ENCODE measurements at regions of chr5 and their contacts with region 1.

Region 1: GRCh38 chr5:172188033-172188892 is at the start of gene STK10:
- DNase-seq: peak; percentile 89 to 92 (median 92)
- H3K4me3 ChIP-seq: peak within 1 kb of the TSS; percentile 94 to 96
- H3K4me3 Mint-ChIP-seq: peak within 1 kb of the TSS; percentile 98 to 100 (median 99)
- H3K27ac ChIP-seq: peak within 1 kb of the TSS; percentile 94
- H3K27ac Mint-ChIP-seq: peak within 1 kb of the TSS; percentile 97 to 100 (median 99)
- H3K4me1 ChIP-seq: peaks cover 25% of the 10 kb centered on the region
- H3K4me1 Mint-ChIP-seq: peaks cover 8 to 46% (median 21%) of the 10 kb centered on the region in 4 donors
- H3K27me3 ChIP-seq: no peaks in the 10 kb centered on the region
- H3K27me3 Mint-ChIP-seq: no peaks in the 10 kb centered on the region
- total RNA-seq, gene STK10: 306 to 314 TPM

Region 2: DNA sequence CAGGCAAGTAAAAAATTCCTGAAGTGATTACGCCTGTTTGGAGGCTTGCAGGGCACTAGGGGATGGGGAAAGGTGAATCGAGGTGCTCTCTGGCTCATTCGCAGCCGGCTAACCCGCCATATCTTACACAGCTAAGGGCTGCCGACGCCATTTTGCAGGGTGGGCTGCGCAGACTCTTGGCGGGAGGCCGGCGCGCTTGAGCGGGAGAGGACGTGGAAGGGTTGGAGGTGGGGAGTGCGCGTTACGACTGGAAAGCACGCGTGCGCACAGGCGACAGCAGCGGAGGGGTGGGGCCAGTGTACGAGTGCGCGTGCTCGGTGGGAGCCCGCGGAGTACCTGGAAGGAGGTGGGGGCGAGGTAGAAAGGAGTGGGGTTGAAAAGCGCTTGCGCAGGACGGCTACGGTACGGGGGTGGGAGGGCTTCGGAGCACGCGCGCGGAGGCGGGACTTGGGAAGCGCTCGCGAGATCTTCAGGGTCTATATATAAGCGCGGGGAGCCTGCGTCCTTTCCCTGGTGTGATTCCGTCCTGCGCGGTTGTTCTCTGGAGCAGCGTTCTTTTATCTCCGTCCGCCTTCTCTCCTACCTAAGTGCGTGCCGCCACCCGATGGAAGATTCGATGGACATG is 800.8 kb before region 1 on chr5 and contains the start of gene NPM1:
- CTCF ChIA-PET with region 1: no interaction called
- POLR2A ChIA-PET with region 1: interaction called, 7 read pairs
- intact Hi-C with region 1: loop called (anchors 5 kb)
- DNase-seq: peak; percentile 97 to 99 (median 99)
- H3K4me3 ChIP-seq: peak within 1 kb of the TSS; percentile 74 to 94
- H3K4me3 Mint-ChIP-seq: peak within 1 kb of the TSS; percentile 97 to 99 (median 98)
- H3K27ac ChIP-seq: peak within 1 kb of the TSS; percentile 79
- H3K27ac Mint-ChIP-seq: peak within 1 kb of the TSS; percentile 95 to 100 (median 99)
- H3K4me1 ChIP-seq: peaks cover 45% of the 10 kb centered on the region
- H3K4me1 Mint-ChIP-seq: peaks cover 29 to 58% (median 43%) of the 10 kb centered on the region in 4 donors
- H3K27me3 ChIP-seq: no peaks in the 10 kb centered on the region
- H3K27me3 Mint-ChIP-seq: peaks cover 0 to 3% of the 10 kb centered on the region in 2 donors
- total RNA-seq, gene NPM1: 857 to 892 TPM

Region 3: DNA sequence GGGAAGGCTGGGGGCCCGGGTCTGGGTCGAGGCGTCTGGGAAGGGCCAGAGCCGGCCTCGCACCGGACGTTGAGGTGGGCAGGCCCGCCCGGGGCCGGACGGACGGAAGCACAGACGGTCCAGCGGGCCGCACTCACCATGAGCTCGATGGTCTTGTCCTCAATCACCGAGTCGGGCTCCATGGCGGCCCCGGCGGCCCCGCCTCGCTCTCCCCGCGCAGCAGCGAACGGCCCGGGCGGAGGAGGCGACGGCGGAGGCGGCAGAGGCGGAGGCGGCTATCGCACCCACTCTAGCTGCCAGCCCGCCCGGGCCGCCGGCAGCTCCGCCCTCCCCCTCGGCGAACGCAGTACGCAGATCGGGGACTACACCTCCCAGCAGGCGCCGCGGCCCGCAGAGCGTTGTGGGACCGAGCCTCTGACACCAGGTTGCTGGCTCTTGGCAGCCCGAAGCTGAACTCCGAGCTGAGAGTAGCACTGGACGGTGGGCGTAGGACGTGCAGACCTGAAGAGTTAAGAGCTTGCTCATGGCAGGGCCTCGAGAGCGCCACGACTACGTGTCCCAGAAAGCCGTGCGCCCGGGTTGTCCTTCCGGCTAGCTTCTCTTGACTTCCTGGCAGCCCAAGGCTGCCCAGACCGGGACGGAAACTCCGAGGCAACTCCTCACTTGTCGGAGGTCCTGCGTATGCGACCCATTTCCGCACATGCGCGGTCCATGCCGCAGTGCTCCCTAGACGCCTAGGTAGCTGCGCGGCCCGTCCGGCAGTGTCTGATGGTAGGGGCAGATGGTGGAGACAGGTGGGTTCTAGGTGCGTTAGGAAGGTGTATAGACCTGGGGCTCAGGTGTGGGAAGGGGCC is 181.7 kb before region 1 on chr5 and contains the start of gene FBXW11:
- CTCF ChIA-PET with region 1: interaction called, 25 read pairs
- POLR2A ChIA-PET with region 1: interaction called, 24 read pairs
- intact Hi-C with region 1: loop called (anchors 1 kb)
- DNase-seq: peak; percentile 93 to 98 (median 94)
- H3K4me3 ChIP-seq: peak within 1 kb of the TSS; percentile 93 to 97
- H3K4me3 Mint-ChIP-seq: peak within 1 kb of the TSS; percentile 91 to 99 (median 97)
- H3K27ac ChIP-seq: peak within 1 kb of the TSS; percentile 93
- H3K27ac Mint-ChIP-seq: peak within 1 kb of the TSS; percentile 93 to 99 (median 98)
- H3K4me1 ChIP-seq: peaks cover 53% of the 10 kb centered on the region
- H3K4me1 Mint-ChIP-seq: peaks cover 32 to 56% (median 46%) of the 10 kb centered on the region in 4 donors
- H3K27me3 ChIP-seq: no peaks in the 10 kb centered on the region
- H3K27me3 Mint-ChIP-seq: no peaks in the 10 kb centered on the region
- total RNA-seq, gene FBXW11: 41.7 to 43.4 TPM

Region 4: GRCh38 chr5:172071289-172071875 is 116.9 kb before region 1 on chr5:
- CTCF ChIA-PET with region 1: interaction called, 16 read pairs
- POLR2A ChIA-PET with region 1: interaction called, 25 read pairs
- intact Hi-C with region 1: loop called (anchors 1 kb)
- DNase-seq: no peak
- H3K4me3 ChIP-seq: no peak overlapping the region
- H3K4me3 Mint-ChIP-seq: peak overlapping the region in 6 of 8 donors; percentile 8 to 62 (median 32)
- H3K27ac ChIP-seq: no peak overlapping the region
- H3K27ac Mint-ChIP-seq: peak overlapping the region; percentile 1 to 95 (median 29)
- H3K4me1 ChIP-seq: peaks cover 60% of the 10 kb centered on the region
- H3K4me1 Mint-ChIP-seq: peaks cover 39 to 65% (median 50%) of the 10 kb centered on the region in 4 donors
- H3K27me3 ChIP-seq: no peaks in the 10 kb centered on the region
- H3K27me3 Mint-ChIP-seq: no peaks in the 10 kb centered on the region

Region 5: DNA sequence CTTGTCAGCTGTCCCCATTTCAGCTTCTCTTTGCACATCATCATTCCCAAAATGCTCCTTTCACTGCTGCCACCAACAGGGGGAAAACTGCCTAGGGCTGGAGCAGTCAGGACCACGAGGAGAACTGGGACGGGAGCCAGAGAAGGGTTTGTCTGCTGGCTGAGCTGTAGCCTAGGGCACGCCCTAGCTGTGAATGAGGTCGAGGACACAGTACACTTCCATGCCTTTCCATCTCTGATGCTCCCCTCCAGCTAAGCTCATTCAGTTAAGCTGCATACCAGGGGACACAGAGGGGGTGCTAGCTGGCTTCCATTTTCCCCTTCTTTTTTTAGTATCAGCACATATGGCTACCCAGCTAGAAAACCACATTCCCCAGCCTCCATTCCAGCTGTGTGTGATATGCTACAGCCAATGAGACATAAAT is 65.0 kb before region 1 on chr5:
- CTCF ChIA-PET with region 1: interaction called, 248 read pairs
- POLR2A ChIA-PET with region 1: interaction called, 597 read pairs
- intact Hi-C with region 1: no loop called
- DNase-seq: no peak
- H3K4me3 ChIP-seq: no peak overlapping the region
- H3K4me3 Mint-ChIP-seq: no peak overlapping the region
- H3K27ac ChIP-seq: no peak overlapping the region
- H3K27ac Mint-ChIP-seq: peak overlapping the region; percentile 42 to 93 (median 49)
- H3K4me1 ChIP-seq: peaks cover 48% of the 10 kb centered on the region
- H3K4me1 Mint-ChIP-seq: peaks cover 26 to 78% (median 41%) of the 10 kb centered on the region in 4 donors
- H3K27me3 ChIP-seq: no peaks in the 10 kb centered on the region
- H3K27me3 Mint-ChIP-seq: no peaks in the 10 kb centered on the region

Region 6: DNA sequence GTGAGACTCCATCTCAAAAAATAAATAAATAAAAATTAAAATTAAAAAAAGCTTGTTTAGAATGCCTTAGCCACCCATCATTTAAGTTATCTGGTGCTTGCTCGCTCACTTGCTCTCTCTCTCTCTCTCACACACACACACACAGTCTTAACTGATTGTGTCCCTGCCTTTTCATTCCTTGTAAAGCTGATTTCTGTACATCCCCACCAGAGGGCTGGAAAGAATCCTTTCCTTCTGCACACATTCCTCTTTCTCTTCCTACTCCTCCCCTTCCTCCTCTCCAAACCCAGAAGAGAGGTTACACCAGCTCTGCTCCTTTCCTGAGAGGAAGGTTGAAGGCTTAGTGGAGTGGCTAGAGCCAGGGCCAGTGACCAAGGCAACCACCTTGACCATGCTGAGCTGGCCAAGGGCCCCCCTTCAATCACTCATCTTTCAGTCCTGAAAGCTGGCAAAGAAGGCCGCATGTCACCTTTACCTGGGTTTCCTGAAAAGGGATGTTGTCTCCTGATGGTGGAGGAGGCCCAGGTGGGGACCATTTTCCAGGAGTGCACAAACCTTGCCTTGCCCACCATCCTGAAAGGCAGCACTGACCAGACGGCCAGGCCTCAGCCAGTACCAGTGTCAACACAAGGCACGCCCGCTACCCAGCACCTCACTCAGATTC is 25.8 kb before region 1 on chr5:
- CTCF ChIA-PET with region 1: interaction called, 429 read pairs
- POLR2A ChIA-PET with region 1: interaction called, 80 read pairs
- intact Hi-C with region 1: no loop called
- DNase-seq: no peak
- H3K4me3 ChIP-seq: no peak overlapping the region
- H3K4me3 Mint-ChIP-seq: peak overlapping the region in 5 of 8 donors; percentile 37 to 77 (median 56)
- H3K27ac ChIP-seq: no peak overlapping the region
- H3K27ac Mint-ChIP-seq: peak overlapping the region; percentile 9 to 94 (median 66)
- H3K4me1 ChIP-seq: peaks cover 87% of the 10 kb centered on the region
- H3K4me1 Mint-ChIP-seq: peaks cover 45 to 96% (median 71%) of the 10 kb centered on the region in 4 donors
- H3K27me3 ChIP-seq: no peaks in the 10 kb centered on the region
- H3K27me3 Mint-ChIP-seq: no peaks in the 10 kb centered on the region